CD4-positive, alpha-beta memory T cell (primary cell): ENCODE measurements at regions of chr6 and their contacts with region 1.

Region 1: DNA sequence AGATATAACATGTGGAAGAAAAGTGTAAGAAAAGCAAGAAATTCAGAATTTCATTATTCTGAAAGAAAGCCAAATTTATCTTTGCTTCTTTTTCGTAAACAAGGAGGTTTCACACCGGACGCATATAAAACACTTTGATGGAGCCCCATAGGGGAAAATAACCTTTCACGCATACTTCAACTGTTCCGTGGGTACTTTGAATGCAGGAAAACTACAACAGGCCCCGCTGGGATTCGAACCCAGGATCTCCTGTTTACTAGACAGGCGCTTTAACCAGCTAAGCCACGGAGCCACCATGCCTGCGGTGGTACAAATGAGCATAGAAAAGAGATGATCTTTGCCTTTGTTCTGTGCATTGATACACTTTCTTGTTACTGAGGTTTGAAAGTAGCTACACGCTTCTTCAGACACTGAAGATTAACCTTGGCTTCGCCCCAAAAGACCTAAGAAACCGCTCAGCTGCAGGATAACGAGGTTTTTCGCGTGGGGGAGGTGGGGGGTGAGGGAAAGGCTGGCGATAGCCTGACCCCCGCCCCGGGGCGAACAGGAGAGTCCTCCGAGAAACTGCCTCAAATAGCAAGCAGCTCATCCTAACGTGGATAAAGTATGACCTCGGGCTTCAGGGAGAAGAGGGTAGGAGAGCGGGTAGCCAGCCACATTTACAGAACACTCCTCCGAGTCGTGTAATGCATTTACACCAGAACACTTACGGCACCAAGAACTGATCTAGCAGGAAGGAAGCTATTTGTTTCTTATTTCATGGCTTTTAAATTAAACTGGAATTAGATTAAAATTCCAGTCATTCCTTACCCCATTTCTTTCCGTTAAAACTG is 5.3 kb upstream of the HMGN4 start:
- DNase-seq: peak; percentile 90 to 94 (median 91)
- H3K4me3 ChIP-seq: peak overlapping the region; percentile 86 to 93
- H3K4me3 Mint-ChIP-seq: peak overlapping the region; percentile 94 to 99 (median 96)
- H3K27ac ChIP-seq: peak overlapping the region; percentile 74
- H3K27ac Mint-ChIP-seq: peak overlapping the region; percentile 91 to 99 (median 96)
- H3K4me1 ChIP-seq: peaks cover 41% of the 10 kb centered on the region
- H3K4me1 Mint-ChIP-seq: peaks cover 33 to 51% (median 40%) of the 10 kb centered on the region in 4 donors
- H3K27me3 ChIP-seq: no peaks in the 10 kb centered on the region
- H3K27me3 Mint-ChIP-seq: peaks cover 6 to 9% of the 10 kb centered on the region in 2 donors

Region 2: GRCh38 chr6:26329763-26330511 is 203.0 kb before region 1 on chr6:
- CTCF ChIA-PET with region 1: no interaction called
- POLR2A ChIA-PET with region 1: interaction called, 13 read pairs
- intact Hi-C with region 1: no loop called
- DNase-seq: peak; percentile 51 to 66 (median 62)
- H3K4me3 ChIP-seq: no peak overlapping the region
- H3K4me3 Mint-ChIP-seq: peak overlapping the region; percentile 63 to 86 (median 82)
- H3K27ac ChIP-seq: no peak overlapping the region
- H3K27ac Mint-ChIP-seq: peak overlapping the region; percentile 42 to 98 (median 93)
- H3K4me1 ChIP-seq: peaks cover 32% of the 10 kb centered on the region
- H3K4me1 Mint-ChIP-seq: peaks cover 29 to 43% (median 32%) of the 10 kb centered on the region in 4 donors
- H3K27me3 ChIP-seq: peaks cover 7% of the 10 kb centered on the region
- H3K27me3 Mint-ChIP-seq: peaks cover 15 to 38% of the 10 kb centered on the region in 2 donors

Region 3: DNA sequence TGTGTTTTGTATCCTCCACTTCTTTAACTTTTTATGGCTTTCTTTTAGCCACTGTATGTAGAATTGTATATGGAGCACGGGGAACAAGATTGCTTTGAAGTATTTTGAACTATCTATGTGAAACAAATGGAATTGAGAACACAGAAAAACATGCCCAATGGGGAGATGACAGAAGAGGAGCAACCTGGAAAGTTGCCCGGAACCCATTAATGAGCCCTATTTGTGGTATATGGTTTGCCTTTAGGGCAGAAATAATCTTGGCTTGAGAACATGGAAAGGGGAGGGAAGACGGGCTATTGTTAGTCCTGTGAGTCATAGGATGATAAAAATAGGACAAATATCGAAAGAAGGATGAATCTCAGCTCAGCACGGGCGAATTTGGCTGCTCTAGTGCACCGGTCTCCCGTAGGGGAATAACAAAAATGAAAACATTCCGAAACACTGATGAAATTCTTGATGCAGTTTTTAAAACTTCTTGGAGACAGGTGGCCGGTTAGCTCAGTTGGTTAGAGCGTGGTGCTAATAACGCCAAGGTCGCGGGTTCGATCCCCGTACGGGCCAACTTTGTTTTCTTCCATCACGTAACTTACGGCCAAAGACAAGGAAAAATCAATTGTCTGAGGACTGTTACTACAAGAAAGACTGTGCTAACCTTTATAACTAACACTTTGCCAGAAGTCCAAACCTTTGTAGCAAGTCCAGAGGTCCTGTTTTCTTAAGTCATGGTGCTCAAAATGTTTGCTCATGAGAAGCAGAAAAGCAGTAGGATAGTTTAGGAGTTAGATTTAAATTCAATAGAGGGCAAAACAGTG is 20.9 kb after region 1 on chr6:
- CTCF ChIA-PET with region 1: interaction called, 50 read pairs
- POLR2A ChIA-PET with region 1: interaction called, 181 read pairs
- intact Hi-C with region 1: loop called (anchors 1 kb)
- DNase-seq: peak; percentile 83 to 88 (median 86)
- H3K4me3 ChIP-seq: peak overlapping the region; percentile 67 to 93
- H3K4me3 Mint-ChIP-seq: no peak overlapping the region
- H3K27ac ChIP-seq: peak overlapping the region; percentile 31
- H3K27ac Mint-ChIP-seq: no peak overlapping the region
- H3K4me1 ChIP-seq: peaks cover 31% of the 10 kb centered on the region
- H3K4me1 Mint-ChIP-seq: peaks cover 11 to 28% (median 19%) of the 10 kb centered on the region in 4 donors
- H3K27me3 ChIP-seq: no peaks in the 10 kb centered on the region
- H3K27me3 Mint-ChIP-seq: peaks cover 0 to 2% of the 10 kb centered on the region in 2 donors

Region 4: DNA sequence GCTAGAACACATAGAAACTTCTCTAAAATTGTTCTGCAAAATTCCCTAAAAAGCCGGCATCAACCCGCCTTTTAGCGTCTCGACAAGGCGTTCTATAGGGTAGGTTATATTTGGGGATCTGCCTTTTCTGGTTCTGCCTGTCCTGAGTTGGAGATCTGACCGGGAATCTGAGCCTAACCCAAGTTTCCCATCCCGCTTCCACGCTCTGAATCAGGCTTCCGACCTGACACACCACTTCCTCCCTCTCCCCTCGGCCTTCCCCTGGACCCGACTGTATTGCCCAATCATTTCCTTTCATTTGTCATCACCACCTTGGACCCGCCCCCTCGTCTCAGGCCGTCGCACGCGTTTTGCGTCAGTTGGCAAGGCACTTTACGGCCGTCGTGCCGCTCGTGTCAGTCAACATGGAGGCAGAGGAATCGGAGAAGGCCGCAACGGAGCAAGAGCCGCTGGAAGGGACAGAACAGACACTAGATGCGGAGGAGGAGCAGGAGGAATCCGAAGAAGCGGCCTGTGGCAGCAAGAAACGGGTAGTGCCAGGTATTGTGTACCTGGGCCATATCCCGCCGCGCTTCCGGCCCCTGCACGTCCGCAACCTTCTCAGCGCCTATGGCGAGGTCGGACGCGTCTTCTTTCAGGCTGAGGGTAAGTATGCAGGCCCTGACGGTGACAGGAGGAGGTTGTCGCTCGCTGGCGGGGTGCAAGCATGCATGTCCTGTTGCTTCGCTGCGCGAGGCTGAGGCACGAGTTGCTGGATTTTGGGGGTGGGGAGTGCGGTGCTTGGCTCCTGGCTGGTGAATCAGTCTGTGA is 63.9 kb after region 1 on chr6 and contains the start of gene ABT1:
- CTCF ChIA-PET with region 1: interaction called, 10 read pairs
- POLR2A ChIA-PET with region 1: interaction called, 11 read pairs
- intact Hi-C with region 1: loop called (anchors 1 kb)
- DNase-seq: peak; percentile 95 to 98 (median 96)
- H3K4me3 ChIP-seq: peak within 1 kb of the TSS; percentile 76 to 98
- H3K4me3 Mint-ChIP-seq: no peak within 1 kb of the TSS
- H3K27ac ChIP-seq: peak within 1 kb of the TSS; percentile 91
- H3K27ac Mint-ChIP-seq: peak within 1 kb of the TSS in 3 of 7 donors; percentile 80 to 92 (median 88)
- H3K4me1 ChIP-seq: peaks cover 24% of the 10 kb centered on the region
- H3K4me1 Mint-ChIP-seq: peaks cover 0 to 16% (median 8%) of the 10 kb centered on the region in 4 donors
- H3K27me3 ChIP-seq: no peaks in the 10 kb centered on the region
- H3K27me3 Mint-ChIP-seq: peaks cover 15 to 22% of the 10 kb centered on the region in 2 donors
- total RNA-seq, gene ABT1: 33.5 to 34.8 TPM

Region 5: GRCh38 chr6:26613689-26614683 is 81.1 kb after region 1 on chr6:
- CTCF ChIA-PET with region 1: no interaction called
- POLR2A ChIA-PET with region 1: no interaction called
- intact Hi-C with region 1: no loop called
- DNase-seq: peak in 2 of 5 donors; percentile 28 to 30
- H3K4me3 ChIP-seq: peak overlapping the region in 1 of 2 donors; percentile 30
- H3K4me3 Mint-ChIP-seq: peak overlapping the region; percentile 77 to 90 (median 82)
- H3K27ac ChIP-seq: no peak overlapping the region
- H3K27ac Mint-ChIP-seq: peak overlapping the region in 5 of 7 donors; percentile 29 to 86 (median 66)
- H3K4me1 ChIP-seq: peaks cover 13% of the 10 kb centered on the region
- H3K4me1 Mint-ChIP-seq: peaks cover 0 to 30% (median 14%) of the 10 kb centered on the region in 4 donors
- H3K27me3 ChIP-seq: peaks cover 19% of the 10 kb centered on the region
- H3K27me3 Mint-ChIP-seq: peaks cover 16 to 31% of the 10 kb centered on the region in 2 donors